ENCODE measurements at regions of chr5 and their contacts with region 1.

Region 1: GRCh38 chr5:39547553-39548154 is 122.9 kb upstream of the DAB2 start:
- DNase-seq: no peak
- ATAC-seq: peak; percentile 84

Region 2: GRCh38 chr5:39376293-39376714 is 171.3 kb before region 1 on chr5:
- intact Hi-C with region 1: loop called (anchors 5 kb)
- DNase-seq: no peak
- ATAC-seq: peak; percentile 68

Region 3: DNA sequence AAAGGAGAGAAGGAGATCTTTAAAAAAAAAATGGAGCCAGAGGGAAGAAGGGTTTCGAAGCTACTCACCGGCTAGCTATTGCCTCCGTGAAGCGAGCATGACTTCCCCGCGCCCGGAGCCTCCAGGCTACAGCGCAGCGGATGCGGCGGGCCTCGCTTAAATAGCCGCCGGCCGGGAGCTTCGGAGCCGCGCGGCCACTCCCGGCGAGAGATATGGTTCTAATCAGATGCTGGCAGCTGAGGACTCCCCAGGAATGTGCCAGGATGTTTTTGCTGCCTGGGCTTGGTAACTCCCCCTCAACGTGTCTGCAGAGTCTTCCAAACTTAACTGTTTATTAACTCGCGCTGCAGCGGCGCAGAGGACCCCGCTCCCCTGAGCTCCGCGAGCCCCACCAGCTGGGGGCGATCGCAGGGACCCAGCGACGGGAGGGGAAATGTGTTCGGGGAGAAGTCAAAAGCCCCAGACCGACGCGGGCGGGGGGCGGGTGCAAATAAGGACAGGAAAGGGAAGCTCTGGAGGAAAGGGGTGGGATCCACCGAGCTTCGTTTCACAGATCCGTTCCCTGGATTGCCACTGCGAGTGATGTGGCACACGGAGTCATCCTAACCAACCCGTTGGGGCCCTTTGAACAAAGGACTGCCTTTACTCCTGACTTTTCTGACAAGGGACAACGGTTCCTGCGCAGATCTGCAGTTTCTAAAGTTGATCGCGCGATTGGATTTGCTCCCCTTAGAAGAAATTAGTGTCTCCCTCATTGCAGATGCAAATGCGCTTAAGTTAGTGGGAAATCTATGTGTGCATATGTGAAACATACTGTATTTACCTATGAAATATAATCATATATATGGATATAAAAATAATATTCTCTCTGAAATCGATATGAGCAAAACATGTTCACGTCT is 122.7 kb before region 1 on chr5 and contains the start of gene DAB2:
- intact Hi-C with region 1: loop called (anchors 10 kb)
- DNase-seq: peak; percentile 92
- ATAC-seq: peak; percentile 82
- total RNA-seq, gene DAB2: 29.9 TPM

Region 4: DNA sequence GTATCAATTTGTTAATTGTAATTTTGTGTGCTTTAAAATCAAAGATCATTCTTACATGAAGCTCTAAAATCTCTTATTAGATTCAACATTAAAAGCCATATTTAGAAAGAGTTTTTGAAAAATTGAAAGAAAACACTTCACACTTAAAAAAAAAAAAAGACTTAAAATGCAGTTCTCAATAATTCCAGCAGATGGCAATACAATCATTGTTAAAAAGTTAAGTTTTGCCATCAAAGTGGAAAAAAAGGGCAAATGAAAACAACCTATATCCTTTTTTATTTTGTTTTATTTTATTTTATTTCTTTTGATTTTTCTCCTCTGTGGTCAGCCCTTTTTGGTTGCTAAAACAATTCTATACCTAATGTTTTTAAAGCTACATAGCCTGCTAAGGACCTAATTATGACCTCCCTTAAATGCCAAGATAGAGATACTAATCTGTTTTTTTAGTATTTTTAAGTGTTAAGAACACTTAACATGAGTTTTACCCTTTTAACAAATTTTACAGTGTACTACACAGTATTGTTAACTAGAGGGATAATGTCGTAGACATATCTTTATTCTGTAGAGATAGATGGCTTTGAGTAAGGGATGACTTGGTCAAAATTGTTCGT is 31.3 kb after region 1 on chr5:
- intact Hi-C with region 1: no loop called
- DNase-seq: no peak
- ATAC-seq: no peak

Region 5: DNA sequence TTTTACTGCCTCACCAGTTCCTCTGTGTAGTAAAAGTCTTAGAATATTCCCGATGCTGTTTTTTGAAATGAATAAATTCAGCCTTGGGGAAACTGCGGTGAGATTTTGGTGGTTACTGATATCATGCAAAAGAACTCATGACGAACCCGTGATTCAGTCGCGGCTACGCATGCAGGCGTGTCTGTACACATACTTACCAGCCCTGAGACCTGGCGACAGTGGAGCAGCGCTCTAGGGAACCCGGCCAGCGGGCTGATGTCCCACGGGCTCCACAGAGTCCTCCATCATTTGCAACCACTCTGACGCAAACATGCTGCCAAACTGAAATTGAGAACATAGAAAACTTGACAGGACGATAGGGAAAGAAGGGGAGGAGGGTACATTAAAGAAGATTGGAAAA is 192.8 kb after region 1 on chr5:
- intact Hi-C with region 1: no loop called
- DNase-seq: no peak
- ATAC-seq: no peak